ENCODE measurements at regions of chr1 and their contacts with region 1.

Region 1: GRCh38 chr1:31938174-31938950 is at the start of gene PTP4A2:
- DNase-seq: peak; percentile 94
- ATAC-seq: peak; percentile 71
- H3K4me3 Mint-ChIP-seq: peak within 1 kb of the TSS; percentile 97
- H3K27ac Mint-ChIP-seq: peak within 1 kb of the TSS; percentile 98
- H3K4me1 Mint-ChIP-seq: peaks cover 64% of the 10 kb centered on the region
- H3K27me3 Mint-ChIP-seq: no peaks in the 10 kb centered on the region
- total RNA-seq, gene PTP4A2: 356 to 363 TPM

Region 2: GRCh38 chr1:31523769-31524168 is 414.6 kb before region 1 on chr1:
- POLR2A ChIA-PET with region 1: no interaction called
- DNase-seq: no peak
- ATAC-seq: no peak
- H3K4me3 Mint-ChIP-seq: no peak overlapping the region
- H3K27ac Mint-ChIP-seq: no peak overlapping the region
- H3K4me1 Mint-ChIP-seq: no peaks in the 10 kb centered on the region
- H3K27me3 Mint-ChIP-seq: peaks cover 13% of the 10 kb centered on the region

Region 3: GRCh38 chr1:31848381-31848897 is 89.9 kb before region 1 on chr1:
- POLR2A ChIA-PET with region 1: interaction called, 11 read pairs
- DNase-seq: peak; percentile 61
- ATAC-seq: peak; percentile 86
- H3K4me3 Mint-ChIP-seq: peak overlapping the region; percentile 73
- H3K27ac Mint-ChIP-seq: peak overlapping the region; percentile 94
- H3K4me1 Mint-ChIP-seq: peaks cover 44% of the 10 kb centered on the region
- H3K27me3 Mint-ChIP-seq: peaks cover 2% of the 10 kb centered on the region

Region 4: DNA sequence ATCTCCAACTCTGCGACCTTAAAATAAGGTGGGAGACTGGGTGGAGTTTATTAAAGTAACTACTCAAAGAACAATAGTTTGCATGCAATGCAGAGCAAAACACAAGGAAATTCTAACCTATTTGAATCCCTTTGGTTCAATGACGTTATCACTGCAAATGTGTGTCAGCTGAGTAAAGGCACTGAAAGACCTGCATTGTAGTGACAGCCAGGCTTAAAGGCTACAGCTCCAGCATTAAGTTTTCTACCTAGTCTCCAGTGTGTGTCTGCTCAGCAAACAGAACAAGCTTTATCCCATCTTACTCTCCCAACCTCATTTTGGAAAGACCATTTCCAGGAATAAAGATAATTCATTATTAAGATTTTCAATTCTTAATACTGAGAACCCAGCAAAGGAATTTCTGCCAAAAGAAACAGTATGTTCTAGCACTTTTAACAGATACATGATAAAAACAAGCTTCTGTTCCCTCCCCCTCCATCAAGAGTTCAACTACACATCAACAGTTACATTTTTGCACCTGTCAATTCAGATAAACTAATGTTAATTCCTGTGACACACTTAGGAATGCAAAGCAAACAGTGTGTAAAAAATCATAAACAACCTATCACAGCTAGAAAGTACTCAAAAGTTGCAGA is 14.3 kb before region 1 on chr1:
- POLR2A ChIA-PET with region 1: interaction called, 41 read pairs
- DNase-seq: no peak
- ATAC-seq: no peak
- H3K4me3 Mint-ChIP-seq: peak overlapping the region; percentile 61
- H3K27ac Mint-ChIP-seq: peak overlapping the region; percentile 82
- H3K4me1 Mint-ChIP-seq: peaks cover 67% of the 10 kb centered on the region
- H3K27me3 Mint-ChIP-seq: no peaks in the 10 kb centered on the region

Region 5: DNA sequence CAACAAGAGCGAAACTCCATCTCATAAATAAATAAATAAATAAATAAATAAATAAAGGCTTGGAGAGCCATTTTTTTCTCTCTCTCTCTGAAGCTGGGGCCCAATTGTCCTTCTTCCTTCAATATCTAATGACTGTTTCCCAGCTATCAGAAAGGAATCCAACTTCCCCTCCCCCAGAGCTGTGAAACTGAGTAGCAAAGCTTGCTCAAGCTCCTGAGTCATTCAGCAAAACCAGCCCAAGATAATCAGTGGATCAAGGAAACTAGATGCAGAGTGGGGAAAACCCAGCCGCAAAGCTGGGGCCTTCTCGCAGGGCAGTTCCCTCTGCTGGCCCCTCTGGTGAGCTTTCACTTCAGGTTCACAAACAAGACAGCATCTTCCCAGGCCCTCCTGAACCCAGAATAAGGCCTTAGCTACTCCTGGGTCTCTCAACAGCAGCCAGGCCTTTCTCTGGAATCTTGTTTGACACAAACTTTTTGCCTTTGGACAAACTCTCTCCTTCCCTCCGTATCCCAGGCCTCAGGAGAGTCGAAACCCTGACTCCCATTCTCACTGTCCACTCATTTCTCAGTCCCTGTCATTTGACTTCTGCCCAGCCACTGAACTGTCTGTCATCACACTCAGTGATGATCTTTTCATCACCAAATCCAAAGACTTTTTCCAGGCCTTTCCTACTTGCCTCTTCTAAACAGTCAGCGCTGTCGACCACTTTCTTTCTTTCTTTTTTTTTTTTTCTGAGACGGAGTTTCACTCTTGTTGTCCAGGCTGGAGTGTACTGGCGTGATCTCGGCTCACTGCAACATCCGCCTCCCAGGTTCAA is 17.8 kb after region 1 on chr1:
- POLR2A ChIA-PET with region 1: interaction called, 319 read pairs
- DNase-seq: peak; percentile 63
- ATAC-seq: peak; percentile 84
- H3K4me3 Mint-ChIP-seq: peak overlapping the region; percentile 80
- H3K27ac Mint-ChIP-seq: peak overlapping the region; percentile 96
- H3K4me1 Mint-ChIP-seq: peaks cover 60% of the 10 kb centered on the region
- H3K27me3 Mint-ChIP-seq: no peaks in the 10 kb centered on the region

Measured in activated naive CD8-positive, alpha-beta T cell treated with anti-CD3 and anti-CD28 coated beads, Interleukin-2, amount 10 ng/mL, durations not matched to agents 7 days and 5 days (primary cell).